ENCODE measurements at regions of chr1 and their contacts with region 1.

Region 1: DNA sequence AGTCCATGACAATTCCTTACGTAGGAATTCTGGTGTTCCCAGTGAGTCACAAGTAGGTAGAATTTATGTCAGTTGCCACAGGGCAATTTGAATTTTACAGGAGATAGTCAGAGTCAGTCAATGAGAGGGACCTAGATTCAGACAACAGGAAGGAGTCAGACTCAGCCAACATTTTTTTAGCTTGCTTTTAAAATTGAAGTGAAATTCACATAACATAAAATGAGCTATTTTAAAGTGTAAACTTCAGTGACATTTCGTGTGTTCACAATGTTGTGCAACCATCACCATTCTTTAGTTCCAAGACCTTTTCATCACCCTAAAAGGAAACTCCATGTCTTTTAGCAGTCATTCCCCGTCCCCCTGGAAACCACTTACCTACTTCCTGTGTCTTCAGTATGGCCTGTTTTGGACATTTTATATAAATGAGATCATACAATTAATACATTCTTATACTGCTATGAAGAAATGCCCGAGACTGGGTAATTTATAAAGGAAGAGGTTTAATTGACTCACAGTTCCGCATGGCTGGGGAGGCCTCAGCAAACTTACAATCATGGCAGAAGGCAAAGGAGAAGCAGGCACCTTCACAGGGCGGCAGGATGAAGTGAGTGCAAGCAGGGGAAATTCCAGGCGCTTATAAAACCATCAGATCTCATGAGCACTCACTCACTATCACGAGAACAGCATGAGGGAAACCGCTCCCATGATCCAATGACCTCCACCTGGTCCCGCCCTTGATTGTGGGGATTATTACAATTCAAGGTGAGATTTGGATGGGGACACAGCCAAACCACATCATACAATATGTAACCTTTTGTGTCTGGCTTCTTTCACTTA is 14.7 kb downstream of the AJAP1 start:
- DNase-seq: peak; percentile 78
- H3K4me3 Mint-ChIP-seq: no peak overlapping the region
- H3K27ac Mint-ChIP-seq: peak overlapping the region; percentile 11
- H3K4me1 Mint-ChIP-seq: peaks cover 6% of the 10 kb centered on the region
- H3K27me3 Mint-ChIP-seq: no peaks in the 10 kb centered on the region
- CTCF ChIP-seq: no peak

Region 2: GRCh38 chr1:5504354-5504720 is 835.3 kb after region 1 on chr1:
- CTCF ChIA-PET with region 1: no interaction called
- POLR2A ChIA-PET with region 1: no interaction called
- intact Hi-C with region 1: loop called (anchors 5 kb)
- DNase-seq: peak; percentile 16
- H3K4me3 Mint-ChIP-seq: peak overlapping the region; percentile 21
- H3K27ac Mint-ChIP-seq: peak overlapping the region; percentile 46
- H3K4me1 Mint-ChIP-seq: peaks cover 33% of the 10 kb centered on the region
- H3K27me3 Mint-ChIP-seq: peaks cover 3% of the 10 kb centered on the region
- CTCF ChIP-seq: no peak